ENCODE measurements at regions of chr5 and their contacts with region 1.

Region 1: GRCh38 chr5:39217365-39218281 is 1.7 kb downstream of the FYB1 start:
- DNase-seq: no peak
- H3K4me3 ChIP-seq: no peak overlapping the region
- CTCF ChIP-seq: peak; percentile 84

Region 2: DNA sequence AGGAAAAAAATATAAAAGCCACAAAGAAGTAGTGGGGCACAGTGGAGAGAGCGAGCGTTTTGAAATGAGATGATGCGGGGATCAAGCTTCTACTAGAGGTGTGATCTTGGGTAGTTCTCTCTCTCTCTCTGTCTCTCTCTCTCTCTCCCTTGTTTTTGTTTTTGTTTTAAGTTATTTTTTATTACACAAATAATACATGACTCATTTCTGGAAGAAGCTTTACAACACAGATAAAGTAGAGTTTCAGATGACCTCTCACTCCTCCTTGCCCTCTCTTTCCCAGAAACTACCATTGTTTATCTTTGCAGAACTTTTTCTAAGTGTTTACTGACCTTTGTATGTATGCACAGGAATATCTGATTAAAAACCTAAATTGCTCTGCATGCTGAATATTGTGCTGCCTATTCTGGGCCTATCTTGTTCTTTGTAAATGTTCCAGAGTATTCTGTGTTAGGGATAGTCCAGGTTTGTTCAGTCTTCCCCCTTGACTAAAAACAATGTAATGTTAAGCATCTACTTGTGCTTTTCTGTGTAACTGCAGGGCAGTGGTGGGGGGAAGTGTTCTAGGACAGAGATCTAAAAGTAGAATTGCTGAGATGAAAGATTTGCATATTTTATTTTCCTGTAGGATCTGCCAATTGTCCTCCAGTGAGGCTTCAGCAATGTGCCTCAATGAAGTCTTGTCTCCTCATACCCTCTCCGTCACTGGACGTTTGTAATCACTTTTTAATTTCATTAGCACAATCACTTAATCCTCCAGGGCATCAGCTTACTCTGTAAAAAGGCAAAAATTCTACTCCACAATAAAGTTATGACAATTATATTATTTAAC is 50.3 kb before region 1 on chr5:
- CTCF ChIA-PET with region 1: interaction called, 26 read pairs
- POLR2A ChIA-PET with region 1: no interaction called
- DNase-seq: no peak
- H3K4me3 ChIP-seq: no peak overlapping the region
- CTCF ChIP-seq: no peak

Region 3: DNA sequence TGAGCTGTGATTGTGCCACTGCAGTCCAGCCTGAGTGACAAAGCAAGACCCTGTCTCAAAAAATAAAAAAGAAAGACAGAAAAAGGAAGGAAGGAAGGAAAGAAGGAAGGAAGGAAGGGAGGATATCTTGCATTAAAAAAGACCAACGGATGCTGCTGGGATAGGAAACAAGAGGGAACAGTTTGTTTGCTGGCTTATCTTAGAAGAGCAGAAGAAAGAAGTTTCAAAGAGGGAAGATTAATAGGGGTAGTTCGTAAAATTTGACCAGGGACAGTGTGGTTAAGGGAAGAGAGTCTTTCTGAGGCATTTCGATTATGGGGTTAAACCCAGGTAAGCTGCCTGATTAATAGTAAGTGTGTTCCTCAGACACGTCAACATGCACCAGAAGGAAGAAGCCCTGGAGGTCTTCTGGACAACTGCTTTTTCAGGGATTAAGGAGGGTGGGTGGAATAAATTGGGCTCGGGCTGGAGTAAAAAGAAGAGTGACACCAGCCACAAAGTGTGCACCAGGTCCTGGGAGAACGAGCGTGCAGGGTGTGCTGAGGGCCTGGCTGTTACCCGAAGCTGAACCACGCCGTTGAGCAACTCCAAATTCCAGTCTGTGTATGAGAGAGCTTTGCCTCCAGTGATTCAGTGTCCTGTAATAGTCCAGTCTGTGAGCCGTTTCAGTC is 23.0 kb before region 1 on chr5:
- CTCF ChIA-PET with region 1: interaction called, 45 read pairs
- POLR2A ChIA-PET with region 1: no interaction called
- DNase-seq: peak; percentile 56
- H3K4me3 ChIP-seq: no peak overlapping the region
- CTCF ChIP-seq: no peak

Region 4: GRCh38 chr5:39249564-39250274 is 32.1 kb after region 1 on chr5:
- CTCF ChIA-PET with region 1: interaction called, 25 read pairs
- POLR2A ChIA-PET with region 1: no interaction called
- DNase-seq: no peak
- H3K4me3 ChIP-seq: no peak overlapping the region
- CTCF ChIP-seq: no peak

Region 5: DNA sequence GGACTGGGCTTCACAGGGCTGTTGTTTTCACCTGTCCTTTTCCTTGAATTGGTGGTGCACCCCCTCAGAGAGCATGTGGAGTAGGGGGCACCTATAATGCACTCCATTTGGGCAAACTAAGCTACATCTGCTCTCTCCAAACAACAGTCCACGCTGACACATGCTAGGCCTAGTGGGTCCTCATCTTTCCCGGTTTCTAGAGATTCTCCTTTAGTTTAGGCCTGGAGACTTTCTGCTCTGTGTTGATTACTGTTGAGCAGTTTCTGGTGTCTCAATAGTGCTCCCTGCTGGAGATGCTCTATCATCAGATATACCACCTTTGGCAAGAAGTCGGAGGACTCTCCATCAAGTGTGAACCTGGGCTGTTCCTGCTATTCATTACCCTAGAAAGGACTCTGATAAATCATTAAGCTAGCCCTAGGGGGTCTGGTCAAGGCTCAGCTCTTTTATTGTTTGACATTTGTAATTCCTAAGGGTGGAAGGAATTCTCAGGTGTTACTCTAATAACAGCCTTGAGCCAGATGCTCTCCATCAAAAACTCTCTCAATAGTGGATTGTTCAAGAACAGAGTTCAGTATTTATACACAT is 65.7 kb after region 1 on chr5:
- CTCF ChIA-PET with region 1: interaction called, 108 read pairs
- POLR2A ChIA-PET with region 1: no interaction called
- DNase-seq: peak; percentile 9
- H3K4me3 ChIP-seq: no peak overlapping the region
- CTCF ChIP-seq: peak; percentile 57

Region 6: DNA sequence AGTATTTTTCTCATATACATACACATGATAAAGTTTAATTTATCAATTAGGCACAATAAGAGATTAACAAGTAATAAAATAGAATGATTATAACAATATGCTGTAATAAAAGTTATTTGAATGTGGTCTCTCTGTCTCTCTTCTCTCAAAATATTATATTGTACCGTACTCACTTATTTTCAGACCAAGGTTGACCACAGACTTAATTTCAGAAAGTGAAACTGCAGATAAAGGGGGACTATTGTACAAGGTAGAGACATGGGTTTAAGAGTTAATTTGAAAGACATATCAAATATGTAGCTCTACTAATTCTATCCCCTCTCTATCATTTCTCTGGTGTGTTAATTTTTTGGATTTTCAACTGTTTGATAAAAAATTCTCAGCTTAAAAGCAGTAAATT is 166.6 kb after region 1 on chr5:
- CTCF ChIA-PET with region 1: no interaction called
- POLR2A ChIA-PET with region 1: no interaction called
- DNase-seq: no peak
- H3K4me3 ChIP-seq: no peak overlapping the region
- CTCF ChIP-seq: no peak

Measured in AG04449 (cell line).